ENCODE measurements at regions of chr20 and their contacts with region 1.

Region 1: GRCh38 chr20:1802385-1803060 is 92.7 kb upstream of the SIRPA start:
- DNase-seq: no peak
- H3K4me3 ChIP-seq: peak overlapping the region; percentile 54
- CTCF ChIP-seq: peak; percentile 89

Region 2: DNA sequence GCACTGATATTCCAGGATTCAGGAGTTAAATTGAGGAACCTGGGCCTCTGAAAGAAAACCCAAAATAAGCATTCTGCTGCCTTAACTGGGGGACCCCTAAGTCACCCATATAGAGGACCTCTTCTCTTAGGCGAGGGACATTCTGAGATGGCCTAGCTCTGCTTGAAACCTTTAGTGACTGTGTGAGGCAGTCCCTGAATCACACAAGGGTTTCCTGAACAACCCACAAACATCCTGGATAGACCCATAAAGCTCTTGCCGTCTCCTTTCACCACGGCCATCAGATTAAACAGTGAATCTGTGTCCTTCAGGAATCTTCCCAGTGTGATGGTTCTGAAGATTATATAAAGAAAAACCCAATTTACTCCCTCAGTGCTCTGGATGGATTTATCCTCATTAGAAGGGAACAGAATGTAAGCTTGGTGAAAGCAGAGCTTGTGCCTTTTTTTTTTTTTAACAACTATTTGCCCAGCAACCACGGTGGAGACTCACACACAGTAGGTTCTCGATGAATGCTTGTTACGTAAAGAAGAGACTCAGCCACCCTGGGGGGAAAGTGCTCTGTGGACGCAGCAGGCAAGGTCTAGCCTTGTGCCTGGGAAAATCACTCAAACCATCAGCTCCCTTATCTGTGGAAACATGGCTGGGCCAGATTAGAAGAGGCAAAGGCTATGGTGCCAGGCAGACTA is 105.9 kb before region 1 on chr20:
- CTCF ChIA-PET with region 1: no interaction called
- POLR2A ChIA-PET with region 1: no interaction called
- DNase-seq: no peak
- H3K4me3 ChIP-seq: no peak overlapping the region
- CTCF ChIP-seq: no peak

Region 3: DNA sequence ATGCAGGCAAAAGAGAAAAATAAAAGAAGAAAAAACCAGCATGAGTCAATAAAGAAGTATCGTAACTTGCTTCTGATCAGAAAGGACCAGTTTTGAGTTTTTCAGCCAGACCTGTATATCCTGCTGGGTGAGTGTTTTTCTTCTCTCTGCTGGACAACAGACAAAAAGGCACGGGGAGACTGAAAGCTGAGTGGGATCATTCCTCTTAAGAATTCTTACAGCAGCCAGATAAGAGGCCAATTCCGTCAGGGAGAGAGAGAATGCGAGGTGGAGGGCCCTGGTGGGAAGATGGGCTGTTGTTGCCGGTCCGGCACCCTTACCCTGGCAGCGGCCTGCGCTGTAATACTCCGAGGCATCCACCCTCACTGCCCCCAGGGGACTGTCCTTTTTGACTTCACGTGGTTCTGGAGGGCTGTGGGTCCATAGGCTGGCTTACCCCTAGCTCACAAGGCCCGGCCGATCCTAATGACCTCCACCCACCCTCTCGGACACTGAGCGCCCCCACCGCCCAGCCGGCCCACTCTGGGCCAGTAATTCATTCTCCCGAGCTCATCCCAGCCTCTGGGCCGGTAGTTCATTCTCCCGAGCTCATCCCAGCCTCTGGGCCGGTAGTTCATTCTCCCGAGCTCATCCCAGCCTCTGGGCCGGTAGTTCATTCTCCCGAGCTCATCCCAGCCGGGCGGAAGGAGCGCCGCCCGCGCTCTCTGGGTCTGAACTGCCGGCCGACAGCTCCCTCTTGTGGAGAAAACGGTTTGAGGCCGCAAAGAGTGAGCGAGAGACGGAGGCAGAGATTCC is 25.6 kb before region 1 on chr20:
- CTCF ChIA-PET with region 1: interaction called, 62 read pairs
- POLR2A ChIA-PET with region 1: no interaction called
- DNase-seq: peak; percentile 37
- H3K4me3 ChIP-seq: peak overlapping the region; percentile 89
- CTCF ChIP-seq: peak; percentile 91

Region 4: DNA sequence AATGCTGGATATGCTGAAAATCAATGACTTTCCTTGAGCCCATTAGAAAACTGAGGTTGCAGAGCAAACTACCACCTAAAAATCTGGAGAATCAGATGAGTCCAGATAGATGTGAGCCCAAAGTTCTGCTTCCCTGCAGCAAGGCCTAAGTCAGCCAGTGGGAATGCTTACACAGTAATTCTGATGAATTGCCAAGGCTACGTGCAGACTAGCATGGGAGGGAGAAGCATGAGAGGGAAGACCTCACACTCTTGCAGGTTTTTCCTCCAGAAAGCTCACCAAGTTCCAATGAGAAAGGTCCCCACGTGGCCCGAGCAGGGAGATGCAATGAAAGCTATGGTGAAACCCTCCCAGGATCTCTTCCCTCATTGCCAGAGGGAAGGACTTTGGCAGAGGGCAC is 12.1 kb before region 1 on chr20:
- CTCF ChIA-PET with region 1: interaction called, 12 read pairs
- POLR2A ChIA-PET with region 1: no interaction called
- DNase-seq: no peak
- H3K4me3 ChIP-seq: no peak overlapping the region
- CTCF ChIP-seq: no peak

Region 5: GRCh38 chr20:1894951-1895673 is 92.6 kb after region 1 on chr20 and contains the start of gene SIRPA:
- CTCF ChIA-PET with region 1: interaction called, 12 read pairs
- POLR2A ChIA-PET with region 1: interaction called, 5 read pairs
- DNase-seq: no peak
- H3K4me3 ChIP-seq: peak within 1 kb of the TSS; percentile 86
- CTCF ChIP-seq: no peak

Region 6: GRCh38 chr20:2183381-2183780 is 380.9 kb after region 1 on chr20:
- CTCF ChIA-PET with region 1: no interaction called
- POLR2A ChIA-PET with region 1: no interaction called
- DNase-seq: no peak
- H3K4me3 ChIP-seq: no peak overlapping the region
- CTCF ChIP-seq: no peak

Measured in AG04449 (cell line).